ENCODE measurements at regions of chr6 and their contacts with region 1.

Region 1: DNA sequence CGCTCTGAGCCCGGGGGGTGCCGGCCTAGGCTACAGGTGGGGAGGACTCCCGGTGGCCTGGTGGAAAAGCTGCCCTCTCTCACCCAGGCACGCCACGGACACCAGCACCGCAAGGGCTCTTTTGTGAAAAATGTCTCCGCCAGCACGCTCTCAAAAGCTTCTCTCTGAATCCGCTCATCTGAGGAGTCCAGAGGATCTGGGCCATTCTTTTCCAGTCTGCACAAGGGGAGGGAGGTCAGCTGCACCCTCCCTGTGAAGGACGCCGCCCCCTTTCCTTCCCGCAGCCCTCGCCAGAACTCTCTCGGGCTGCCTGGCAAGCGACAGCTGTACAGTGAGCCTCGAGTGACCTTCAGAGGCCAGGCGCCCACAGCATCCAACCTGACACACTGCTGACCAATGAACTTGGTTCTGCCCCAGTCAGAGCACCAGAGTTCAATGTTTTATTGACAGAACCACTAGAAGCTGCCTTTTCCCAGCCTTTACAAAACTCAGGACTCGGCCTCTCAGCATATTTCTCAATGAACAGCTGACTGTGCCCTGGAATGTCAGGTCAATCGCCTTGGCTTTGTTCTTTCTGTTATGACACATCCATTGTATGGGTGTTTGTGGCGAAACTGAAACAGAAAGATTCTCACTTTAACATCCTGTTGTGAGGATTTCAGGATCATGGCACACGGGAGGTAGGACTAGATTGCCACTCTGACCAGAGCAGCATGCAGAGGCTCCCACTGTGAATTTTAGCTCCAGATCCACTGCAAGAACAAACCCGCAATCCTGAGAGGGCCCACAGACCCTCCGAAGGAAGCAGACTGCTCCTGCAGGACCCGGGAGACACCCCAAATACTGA is 26.7 kb downstream of the SERPINB9 start:
- DNase-seq: peak; percentile 74
- H3K4me3 Mint-ChIP-seq: peak overlapping the region; percentile 86
- H3K27ac Mint-ChIP-seq: peak overlapping the region; percentile 97
- H3K4me1 Mint-ChIP-seq: peaks cover 77% of the 10 kb centered on the region
- H3K27me3 Mint-ChIP-seq: no peaks in the 10 kb centered on the region

Region 2: DNA sequence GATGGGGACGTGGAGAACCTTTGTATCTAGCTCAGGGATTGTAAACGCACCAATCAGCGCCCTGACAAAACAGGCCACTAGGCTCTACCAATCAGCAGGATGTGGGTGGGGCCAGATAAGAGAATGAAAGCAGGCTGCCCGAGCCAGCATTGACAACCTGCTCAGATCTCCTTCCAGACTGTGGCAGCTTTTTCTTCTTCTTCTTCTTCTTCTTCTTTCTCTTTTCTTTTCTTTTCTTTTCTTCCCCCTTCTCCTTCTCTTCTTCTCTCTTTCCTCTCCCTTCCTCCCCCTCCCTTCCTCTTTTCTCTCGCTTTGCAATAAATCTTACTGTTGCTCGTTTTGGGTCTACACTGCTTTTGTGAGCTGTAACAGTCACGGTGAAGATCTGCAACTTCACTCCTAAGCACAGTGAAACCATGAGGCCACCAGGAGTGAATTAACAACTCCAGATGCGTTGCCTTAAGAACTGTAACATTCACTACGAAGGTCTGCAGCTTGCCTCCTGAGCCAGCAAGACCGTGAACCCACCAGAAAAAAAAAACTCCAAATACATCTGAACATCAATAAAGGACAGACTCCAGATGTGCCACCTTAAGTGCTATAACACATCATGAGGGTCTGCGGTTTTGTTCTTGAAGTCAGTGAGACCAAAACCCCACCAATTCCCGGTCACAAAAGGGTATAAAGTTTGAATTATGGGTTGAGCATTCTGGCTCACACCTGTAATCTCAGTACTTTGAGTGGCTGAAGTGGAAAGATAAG is 15.2 kb before region 1 on chr6:
- intact Hi-C with region 1: loop called (anchors 1 kb)
- DNase-seq: peak; percentile 77
- H3K4me3 Mint-ChIP-seq: peak overlapping the region; percentile 77
- H3K27ac Mint-ChIP-seq: peak overlapping the region; percentile 95
- H3K4me1 Mint-ChIP-seq: peaks cover 75% of the 10 kb centered on the region
- H3K27me3 Mint-ChIP-seq: no peaks in the 10 kb centered on the region

Region 3: DNA sequence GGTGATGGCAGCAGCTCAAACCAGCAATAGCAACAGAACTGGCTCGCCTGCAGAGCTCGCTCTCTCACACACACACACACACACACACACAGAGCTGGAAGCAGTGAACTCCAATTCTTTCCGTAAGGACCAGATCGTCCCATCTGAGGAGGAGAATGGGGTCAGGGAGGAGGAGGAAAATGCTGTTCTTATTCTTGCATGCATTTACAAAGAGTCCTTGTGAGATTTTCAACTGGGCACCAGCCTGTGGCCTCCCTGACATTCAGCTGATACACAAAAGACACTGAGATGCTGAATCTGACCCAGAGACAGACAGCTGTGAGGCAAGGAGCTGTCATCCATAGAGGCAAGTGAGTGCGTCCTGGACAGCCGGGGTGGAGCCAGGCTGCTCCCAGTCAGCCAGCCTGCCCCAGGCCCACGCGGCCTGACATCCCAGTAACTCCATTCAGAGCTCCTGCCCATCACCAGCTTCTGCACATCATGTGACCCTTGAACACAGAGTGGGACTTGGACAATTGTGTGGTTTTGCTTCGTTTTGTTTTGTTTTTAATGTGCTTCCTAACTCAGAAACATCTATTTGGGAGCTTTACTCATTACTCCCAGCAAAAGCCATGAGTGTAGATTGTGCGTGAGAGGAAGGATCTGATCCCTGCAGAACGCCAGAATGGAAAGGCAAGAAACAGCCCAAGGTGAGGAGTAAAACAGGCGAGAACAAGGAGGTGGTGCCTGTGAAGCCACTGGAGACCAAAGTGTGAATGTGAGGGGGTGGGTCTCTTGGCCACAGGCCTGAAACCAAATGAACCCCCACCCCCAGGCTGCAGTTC is 24.6 kb after region 1 on chr6:
- intact Hi-C with region 1: loop called (anchors 1 kb)
- DNase-seq: peak; percentile 63
- H3K4me3 Mint-ChIP-seq: peak overlapping the region; percentile 97
- H3K27ac Mint-ChIP-seq: peak overlapping the region; percentile 90
- H3K4me1 Mint-ChIP-seq: peaks cover 51% of the 10 kb centered on the region
- H3K27me3 Mint-ChIP-seq: no peaks in the 10 kb centered on the region